ENCODE measurements at regions of chr7 and their contacts with region 1.

Region 1: GRCh38 chr7:81402227-81402626 is 367.6 kb downstream of the HGF start:
- DNase-seq: no peak
- H3K4me3 ChIP-seq: no peak overlapping the region
- H3K27ac ChIP-seq: no peak overlapping the region
- H3K4me1 ChIP-seq: no peaks in the 10 kb centered on the region
- CTCF ChIP-seq: no peak

Region 2: DNA sequence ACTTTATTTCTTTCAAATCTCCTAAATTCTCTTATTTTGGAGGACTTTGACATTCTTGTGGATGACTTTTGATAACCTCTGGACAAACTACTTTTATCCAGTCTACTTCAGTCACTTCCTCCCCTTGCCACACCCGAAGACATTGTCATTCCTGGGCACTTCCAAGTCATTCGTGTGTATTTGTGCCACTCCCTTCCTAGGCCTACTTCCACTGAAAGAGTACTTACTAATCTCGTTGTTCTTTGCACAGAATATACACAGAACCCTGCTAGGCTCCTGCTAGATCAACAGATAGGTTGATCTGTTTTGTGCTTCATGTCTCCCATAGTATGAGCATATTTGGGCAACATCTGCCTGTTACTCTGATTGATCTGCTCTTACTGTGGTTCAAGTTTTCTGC is 12.2 kb after region 1 on chr7:
- CTCF ChIA-PET with region 1: interaction called, 18 read pairs
- POLR2A ChIA-PET with region 1: no interaction called
- intact Hi-C with region 1: no loop called
- DNase-seq: no peak
- H3K4me3 ChIP-seq: no peak overlapping the region
- H3K27ac ChIP-seq: no peak overlapping the region
- H3K4me1 ChIP-seq: no peaks in the 10 kb centered on the region
- CTCF ChIP-seq: no peak

Region 3: GRCh38 chr7:81469869-81470723 is 67.9 kb after region 1 on chr7:
- CTCF ChIA-PET with region 1: no interaction called
- POLR2A ChIA-PET with region 1: no interaction called
- intact Hi-C with region 1: no loop called
- DNase-seq: peak; percentile 45
- H3K4me3 ChIP-seq: no peak overlapping the region
- H3K27ac ChIP-seq: no peak overlapping the region
- H3K4me1 ChIP-seq: no peaks in the 10 kb centered on the region
- CTCF ChIP-seq: peak; percentile 79

Region 4: GRCh38 chr7:83014546-83014945 is 1612.3 kb after region 1 on chr7:
- CTCF ChIA-PET with region 1: no interaction called
- POLR2A ChIA-PET with region 1: no interaction called
- intact Hi-C with region 1: loop called (anchors 5 kb)
- DNase-seq: no peak
- H3K4me3 ChIP-seq: no peak overlapping the region
- H3K27ac ChIP-seq: no peak overlapping the region
- H3K4me1 ChIP-seq: no peaks in the 10 kb centered on the region
- CTCF ChIP-seq: no peak